ENCODE measurements at regions of chr2 and their contacts with region 1.

Region 1: GRCh38 chr2:38274286-38275276 is 102.5 kb downstream of the ATL2 start:
- DNase-seq: peak; percentile 65
- CTCF ChIP-seq: peak; percentile 53

Region 2: DNA sequence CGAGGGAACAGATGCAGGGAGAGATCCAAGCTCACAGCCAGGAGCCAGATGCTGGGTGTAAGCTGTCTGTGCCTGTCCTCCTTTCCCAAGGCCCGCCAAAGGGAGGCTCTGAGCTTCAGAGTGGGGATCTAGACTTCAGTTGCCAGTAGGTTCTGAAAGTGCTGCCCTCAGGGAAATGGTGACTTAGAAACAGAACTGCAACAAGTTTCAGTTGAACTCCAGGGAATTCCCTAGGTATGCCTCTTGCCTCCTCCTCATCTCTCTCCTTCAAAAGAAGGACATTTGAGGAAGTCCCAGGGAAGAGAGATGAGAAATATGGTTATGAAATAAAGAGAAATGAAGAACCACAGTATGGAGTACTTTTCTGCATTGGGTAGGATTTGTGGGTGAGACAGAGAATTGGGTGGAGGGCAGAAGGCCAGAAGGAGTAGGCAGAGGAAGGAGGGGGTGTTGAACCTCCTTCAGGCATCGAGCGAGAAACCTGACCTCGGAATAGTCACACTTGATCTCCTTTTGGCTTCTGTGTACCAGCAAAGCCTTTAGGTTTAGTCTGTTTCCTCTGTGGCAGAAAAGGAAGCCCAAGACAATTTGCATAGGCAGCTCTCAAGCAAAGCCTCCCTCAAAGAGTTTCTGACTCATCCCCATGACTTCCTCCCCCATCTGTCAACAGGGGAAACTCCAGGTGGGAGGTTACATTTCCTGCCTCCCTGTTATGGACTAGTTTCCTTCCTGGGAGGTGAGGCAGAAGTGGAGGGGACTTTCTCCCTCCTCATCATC is 884.4 kb before region 1 on chr2:
- in situ Hi-C with region 1: loop called (anchors 25 kb)
- DNase-seq: peak; percentile 79
- CTCF ChIP-seq: no peak

Region 3: GRCh38 chr2:37412231-37412630 is 862.4 kb before region 1 on chr2:
- in situ Hi-C with region 1: no loop called
- DNase-seq: no peak
- CTCF ChIP-seq: no peak

Region 4: GRCh38 chr2:37600735-37601134 is 673.8 kb before region 1 on chr2:
- in situ Hi-C with region 1: no loop called
- DNase-seq: no peak
- CTCF ChIP-seq: no peak

Region 5: DNA sequence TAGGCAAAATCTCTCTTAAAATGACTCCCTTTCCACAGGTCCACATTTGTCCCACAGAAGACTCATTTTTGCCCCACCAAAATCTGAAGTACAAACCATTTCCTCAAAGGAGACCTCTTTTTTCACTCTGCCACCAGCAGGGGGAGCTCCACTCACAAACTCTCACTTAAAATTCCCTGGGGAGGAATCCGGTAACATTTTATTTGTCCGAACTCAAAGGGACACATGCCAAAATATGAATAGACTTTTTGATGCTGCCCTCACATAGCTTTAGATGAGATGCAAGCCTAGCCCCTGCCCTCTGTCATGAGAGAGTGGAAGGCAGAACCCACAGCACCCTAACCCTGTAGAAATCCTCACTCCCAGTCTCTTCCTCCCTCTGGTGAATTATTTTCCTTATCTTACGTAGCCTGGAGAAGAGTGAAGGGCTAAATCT is 292.4 kb before region 1 on chr2:
- in situ Hi-C with region 1: loop called (anchors 10 kb)
- DNase-seq: peak; percentile 24
- CTCF ChIP-seq: peak; percentile 57

Region 6: DNA sequence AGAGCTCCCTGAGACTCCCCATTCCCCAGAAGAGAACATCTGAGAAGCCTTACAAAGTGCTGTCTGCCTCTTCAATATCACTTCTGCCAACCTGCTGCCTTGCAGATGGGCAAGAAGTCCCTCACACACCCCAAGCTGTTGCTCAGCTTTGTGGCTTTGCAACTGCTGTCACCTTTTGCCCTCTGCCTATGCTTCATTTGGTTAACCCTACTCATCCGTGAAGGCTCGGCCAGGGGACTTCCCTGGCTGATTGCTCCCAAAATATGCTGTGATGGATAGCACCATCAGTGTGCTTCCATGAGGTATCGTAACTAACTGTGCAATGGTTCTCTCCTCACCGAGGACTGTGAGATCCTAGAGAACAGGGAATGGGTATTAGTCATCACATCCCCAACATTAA is 109.7 kb before region 1 on chr2:
- in situ Hi-C with region 1: no loop called
- DNase-seq: no peak
- CTCF ChIP-seq: no peak

Measured in GM13977 (cell line).